Motor neuron (in vitro differentiated cells): ENCODE measurements at regions of chr14 and their contacts with region 1.

Region 1: GRCh38 chr14:74109369-74109768 is 24.6 kb downstream of the LIN52 start:
- ATAC-seq: no peak
- H3K4me3 ChIP-seq: no peak overlapping the region
- H3K27ac ChIP-seq: no peak overlapping the region
- H3K4me1 ChIP-seq: peaks cover 0 to 2% of the 10 kb centered on the region in 2 donors

Region 2: DNA sequence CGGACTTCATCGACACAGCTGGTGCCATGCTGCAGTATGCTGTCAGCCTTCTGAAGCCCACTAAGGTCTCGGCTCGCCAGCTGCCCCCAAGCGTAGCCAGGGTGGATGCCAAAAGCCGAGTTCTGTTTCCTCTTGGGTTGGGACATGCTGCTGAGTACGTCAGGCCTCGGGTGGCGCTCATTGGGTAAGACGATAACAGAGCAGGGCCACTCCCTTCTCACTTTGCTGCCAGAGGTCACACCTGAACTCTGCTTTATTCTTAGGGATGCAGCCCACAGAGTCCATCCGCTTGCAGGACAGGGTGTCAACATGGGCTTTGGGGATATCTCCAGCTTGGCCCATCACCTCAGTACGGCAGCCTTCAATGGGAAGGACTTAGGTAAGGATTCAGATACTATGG is 148.2 kb before region 1 on chr14:
- in situ Hi-C with region 1: no loop called
- ATAC-seq: no peak
- H3K4me3 ChIP-seq: no peak overlapping the region
- H3K27ac ChIP-seq: no peak overlapping the region
- H3K4me1 ChIP-seq: no peaks in the 10 kb centered on the region

Region 3: DNA sequence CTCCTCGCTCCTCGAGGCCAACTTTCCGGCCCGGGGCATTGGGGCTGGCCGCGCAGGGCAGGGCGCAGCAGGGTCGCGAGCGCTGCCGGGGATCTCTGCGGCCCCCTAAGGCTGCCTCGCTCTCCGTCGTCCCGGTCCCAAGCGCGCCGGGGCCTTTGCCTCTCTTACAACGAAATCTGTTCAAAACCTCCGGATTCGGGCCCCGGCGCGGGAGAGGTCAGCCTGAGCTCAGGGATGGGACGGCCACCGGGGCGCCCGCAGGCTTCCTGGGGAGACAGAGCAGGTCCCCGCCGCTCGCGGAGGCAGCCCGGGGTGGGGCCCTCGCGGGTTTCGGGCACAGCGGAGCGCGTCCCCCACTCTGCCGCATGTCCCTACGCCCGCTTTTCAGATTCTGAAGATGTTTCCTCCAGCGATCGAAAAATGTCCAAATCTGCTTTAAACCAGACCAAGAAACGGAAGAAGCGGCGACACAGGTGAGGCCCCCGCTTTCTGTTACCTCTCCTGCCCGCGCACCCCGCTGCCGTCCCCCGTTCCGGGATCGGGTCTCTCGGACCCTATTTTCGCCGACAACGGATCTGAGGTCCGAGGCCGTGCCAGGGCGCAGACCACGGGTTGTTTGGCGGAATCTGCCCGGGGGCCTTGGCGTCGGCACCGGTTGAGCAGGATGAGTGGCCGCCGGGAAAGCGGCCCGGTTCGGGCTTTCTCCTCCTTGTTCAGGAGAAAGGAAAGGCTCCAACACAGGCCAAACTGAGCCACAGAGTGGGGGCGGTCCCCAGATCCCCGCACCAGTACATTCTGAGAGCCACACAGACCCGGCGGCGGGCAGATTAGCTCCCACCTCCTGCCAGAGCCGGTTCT is 131.7 kb after region 1 on chr14:
- in situ Hi-C with region 1: loop called in 1 of 9 experiments (anchors 25 kb)
- ATAC-seq: peak in 6 of 8 experiments; percentile 15 to 35 (median 31)
- H3K4me3 ChIP-seq: peak overlapping the region in 4 of 5 donors; percentile 20 to 34 (median 26)
- H3K27ac ChIP-seq: peak overlapping the region in 1 of 2 donors; percentile 43
- H3K4me1 ChIP-seq: peaks cover 2 to 7% of the 10 kb centered on the region in 2 donors

Region 4: GRCh38 chr14:74257078-74257989 is 148.0 kb after region 1 on chr14:
- in situ Hi-C with region 1: loop called in 3 of 9 experiments (anchors 10 to 25 kb)
- ATAC-seq: peak; percentile 76 to 90 (median 81)
- H3K4me3 ChIP-seq: peak overlapping the region; percentile 23 to 41 (median 32)
- H3K27ac ChIP-seq: peak overlapping the region; percentile 76 to 78
- H3K4me1 ChIP-seq: peaks cover 14% of the 10 kb centered on the region in 2 donors

Region 5: GRCh38 chr14:74493343-74494261 is 384.2 kb after region 1 on chr14 and contains the start of gene ISCA2:
- in situ Hi-C with region 1: loop called in 1 of 9 experiments (anchors 25 kb)
- ATAC-seq: peak; percentile 88 to 94 (median 93)
- H3K4me3 ChIP-seq: peak within 1 kb of the TSS; percentile 78 to 95 (median 81)
- H3K27ac ChIP-seq: peak within 1 kb of the TSS; percentile 68 to 89
- H3K4me1 ChIP-seq: peaks cover 4 to 15% of the 10 kb centered on the region in 2 donors
- total RNA-seq, gene ISCA2: 14.9 to 30.4 (median 18.9) TPM